SK-N-SH (cell line): ENCODE measurements at regions of chr1 and their contacts with region 1.

Region 1: DNA sequence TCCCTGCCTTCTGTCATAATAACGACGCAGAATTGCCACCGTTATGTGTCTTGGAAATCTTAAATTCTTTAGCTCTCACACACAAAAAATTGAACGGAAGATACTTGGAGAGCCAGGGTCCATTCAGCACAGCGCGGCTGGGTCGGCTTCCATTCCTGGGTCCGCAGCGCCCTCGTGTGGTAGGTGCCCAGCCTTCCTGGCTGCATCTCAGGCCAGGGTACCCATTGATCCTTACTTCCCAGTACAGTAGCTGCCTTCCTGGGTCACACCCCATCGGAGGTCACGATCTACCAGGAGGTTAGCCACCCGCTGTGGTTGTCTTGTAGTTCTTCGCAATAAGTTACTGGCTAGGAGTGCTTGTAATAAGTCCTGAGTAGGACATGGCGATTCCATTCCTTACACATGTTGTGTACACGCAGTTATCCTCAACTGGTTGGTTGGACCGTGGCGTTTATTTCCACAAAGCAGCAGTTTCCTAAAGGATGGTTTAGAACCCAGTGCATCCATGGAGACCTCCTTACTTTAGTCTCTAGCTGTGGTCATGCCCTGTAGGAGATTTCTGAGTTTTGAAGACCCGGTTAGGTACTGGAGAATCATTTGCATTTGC is 9.9 kb upstream of the MTARC1 start:
- DNase-seq: peak; percentile 84
- H3K4me3 ChIP-seq: peak overlapping the region in 1 of 2 experiments; percentile 41; a peak in 1 of 4 replicates
- H3K27ac ChIP-seq: no peak overlapping the region
- H3K4me1 ChIP-seq: no peaks in the 10 kb centered on the region
- H3K27me3 ChIP-seq: no peaks in the 10 kb centered on the region
- CTCF ChIP-seq: peak; percentile 97
- EP300 ChIP-seq: no peak
- RAD21 ChIP-seq: peak; percentile 96

Region 2: GRCh38 chr1:220198186-220199005 is 578.4 kb before region 1 on chr1:
- CTCF ChIA-PET with region 1: interaction called, 17 read pairs
- POLR2A ChIA-PET with region 1: no interaction called
- DNase-seq: no peak
- H3K4me3 ChIP-seq: no peak overlapping the region
- H3K27ac ChIP-seq: peak overlapping the region in 1 of 2 experiments; percentile 71; a peak in 2 of 4 replicates
- H3K4me1 ChIP-seq: no peaks in the 10 kb centered on the region
- H3K27me3 ChIP-seq: no peaks in the 10 kb centered on the region
- CTCF ChIP-seq: no peak
- EP300 ChIP-seq: no peak
- RAD21 ChIP-seq: no peak

Region 3: GRCh38 chr1:220294846-220295301 is 481.9 kb before region 1 on chr1:
- CTCF ChIA-PET with region 1: interaction called, 13 read pairs
- POLR2A ChIA-PET with region 1: no interaction called
- DNase-seq: no peak
- H3K4me3 ChIP-seq: peak overlapping the region; percentile 22 to 48; a peak in 2 of 4 replicates
- H3K27ac ChIP-seq: peak overlapping the region; percentile 76; a peak in 3 of 4 replicates
- H3K4me1 ChIP-seq: peaks cover 7 to 13% of the 10 kb centered on the region in 2 experiments; a peak in 3 of 4 replicates
- H3K27me3 ChIP-seq: no peaks in the 10 kb centered on the region
- CTCF ChIP-seq: no peak
- EP300 ChIP-seq: peak; percentile 33 to 85; a peak in 3 of 4 replicates
- RAD21 ChIP-seq: no peak

Region 4: GRCh38 chr1:220690140-220691025 is 86.4 kb before region 1 on chr1 and contains the start of gene C1orf115:
- CTCF ChIA-PET with region 1: interaction called, 22 read pairs
- POLR2A ChIA-PET with region 1: no interaction called
- DNase-seq: peak; percentile 98
- H3K4me3 ChIP-seq: peak within 1 kb of the TSS; percentile 72 to 80
- H3K27ac ChIP-seq: no peak within 1 kb of the TSS
- H3K4me1 ChIP-seq: peaks cover 0 to 8% of the 10 kb centered on the region in 2 experiments; a peak in 1 of 4 replicates
- H3K27me3 ChIP-seq: no peaks in the 10 kb centered on the region
- CTCF ChIP-seq: peak; percentile 96
- EP300 ChIP-seq: no peak
- RAD21 ChIP-seq: peak; percentile 46
- polyA plus RNA-seq, gene C1orf115: 4.0 and 4.2 TPM in 2 replicates

Region 5: GRCh38 chr1:220733090-220733601 is 43.7 kb before region 1 on chr1:
- CTCF ChIA-PET with region 1: interaction called, 25 read pairs
- POLR2A ChIA-PET with region 1: no interaction called
- DNase-seq: peak; percentile 84
- H3K4me3 ChIP-seq: peak overlapping the region; percentile 2 to 33; a peak in 3 of 4 replicates
- H3K27ac ChIP-seq: peak overlapping the region; percentile 17 to 21; a peak in 3 of 4 replicates
- H3K4me1 ChIP-seq: peaks cover 5 to 15% of the 10 kb centered on the region in 2 experiments; a peak in 3 of 4 replicates
- H3K27me3 ChIP-seq: no peaks in the 10 kb centered on the region
- CTCF ChIP-seq: peak; percentile 85
- EP300 ChIP-seq: 0 out of 4 replicates have a peak, but pooled peaks of 1 of the 2 experiments have one; percentile 8
- RAD21 ChIP-seq: peak; percentile 76

Region 6: GRCh38 chr1:220761688-220762427 is 15.0 kb before region 1 on chr1:
- CTCF ChIA-PET with region 1: interaction called, 59 read pairs
- POLR2A ChIA-PET with region 1: no interaction called
- DNase-seq: no peak
- H3K4me3 ChIP-seq: no peak overlapping the region
- H3K27ac ChIP-seq: no peak overlapping the region
- H3K4me1 ChIP-seq: no peaks in the 10 kb centered on the region
- H3K27me3 ChIP-seq: no peaks in the 10 kb centered on the region
- CTCF ChIP-seq: no peak
- EP300 ChIP-seq: no peak
- RAD21 ChIP-seq: no peak

Region 7: GRCh38 chr1:220852408-220852807 is 75.6 kb after region 1 on chr1:
- CTCF ChIA-PET with region 1: no interaction called
- POLR2A ChIA-PET with region 1: no interaction called
- DNase-seq: no peak
- H3K4me3 ChIP-seq: no peak overlapping the region
- H3K27ac ChIP-seq: no peak overlapping the region
- H3K4me1 ChIP-seq: no peaks in the 10 kb centered on the region
- H3K27me3 ChIP-seq: no peaks in the 10 kb centered on the region
- CTCF ChIP-seq: no peak
- EP300 ChIP-seq: no peak
- RAD21 ChIP-seq: no peak

Region 8: GRCh38 chr1:220926146-220926545 is 149.3 kb after region 1 on chr1:
- CTCF ChIA-PET with region 1: no interaction called
- POLR2A ChIA-PET with region 1: no interaction called
- DNase-seq: no peak
- H3K4me3 ChIP-seq: no peak overlapping the region
- H3K27ac ChIP-seq: no peak overlapping the region
- H3K4me1 ChIP-seq: peaks cover 0 to 2% of the 10 kb centered on the region in 2 experiments; a peak in 1 of 4 replicates
- H3K27me3 ChIP-seq: no peaks in the 10 kb centered on the region
- CTCF ChIP-seq: no peak
- EP300 ChIP-seq: no peak
- RAD21 ChIP-seq: no peak